ENCODE measurements at regions of chr2 and their contacts with region 1.

Region 1: GRCh38 chr2:84856787-84857186 is 24.1 kb downstream of the TRABD2A start:
- DNase-seq: peak in 3 of 5 donors; percentile 29 to 51 (median 30)
- H3K4me3 ChIP-seq: peak overlapping the region in 1 of 2 donors; percentile 23
- H3K4me3 Mint-ChIP-seq: peak overlapping the region; percentile 40 to 89 (median 77)
- H3K27ac ChIP-seq: peak overlapping the region; percentile 53
- H3K27ac Mint-ChIP-seq: peak overlapping the region; percentile 83 to 97 (median 96)
- H3K4me1 ChIP-seq: peaks cover 98% of the 10 kb centered on the region
- H3K4me1 Mint-ChIP-seq: peaks cover 84 to 97% (median 91%) of the 10 kb centered on the region in 4 donors
- H3K27me3 ChIP-seq: no peaks in the 10 kb centered on the region
- H3K27me3 Mint-ChIP-seq: no peaks in the 10 kb centered on the region

Region 2: GRCh38 chr2:84686783-84687476 is 169.9 kb before region 1 on chr2:
- CTCF ChIA-PET with region 1: no interaction called
- POLR2A ChIA-PET with region 1: no interaction called
- intact Hi-C with region 1: loop called (anchors 5 kb)
- DNase-seq: no peak
- H3K4me3 ChIP-seq: no peak overlapping the region
- H3K4me3 Mint-ChIP-seq: peak overlapping the region in 3 of 8 donors; percentile 14 to 48 (median 42)
- H3K27ac ChIP-seq: no peak overlapping the region
- H3K27ac Mint-ChIP-seq: peak overlapping the region in 5 of 7 donors; percentile 5 to 77 (median 54)
- H3K4me1 ChIP-seq: peaks cover 10% of the 10 kb centered on the region
- H3K4me1 Mint-ChIP-seq: peaks cover 16 to 30% (median 21%) of the 10 kb centered on the region in 4 donors
- H3K27me3 ChIP-seq: no peaks in the 10 kb centered on the region
- H3K27me3 Mint-ChIP-seq: no peaks in the 10 kb centered on the region

Region 3: DNA sequence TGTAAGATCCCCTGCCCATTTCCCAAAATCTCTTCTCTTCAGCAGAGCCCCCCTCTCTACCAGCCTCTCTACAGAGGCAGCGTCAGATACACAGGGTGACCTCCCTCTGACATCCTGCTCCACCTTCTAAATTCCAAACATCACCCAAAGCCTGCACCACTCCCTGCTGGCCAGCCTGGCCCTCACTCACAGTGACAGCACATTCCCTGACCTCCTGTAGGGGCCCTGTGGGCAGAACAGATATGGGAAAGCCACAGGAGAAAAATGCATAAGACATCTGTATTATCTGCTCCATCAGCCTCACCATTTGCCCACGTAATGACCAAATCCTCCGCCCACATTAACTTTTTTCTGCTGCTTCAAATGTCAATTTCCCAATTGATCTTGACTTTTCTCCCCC is 16.5 kb before region 1 on chr2:
- CTCF ChIA-PET with region 1: interaction called, 14 read pairs
- POLR2A ChIA-PET with region 1: interaction called, 132 read pairs
- intact Hi-C with region 1: no loop called
- DNase-seq: peak in 1 of 5 donors; percentile 10
- H3K4me3 ChIP-seq: peak overlapping the region in 1 of 2 donors; percentile 39
- H3K4me3 Mint-ChIP-seq: peak overlapping the region; percentile 63 to 87 (median 80)
- H3K27ac ChIP-seq: peak overlapping the region; percentile 61
- H3K27ac Mint-ChIP-seq: peak overlapping the region; percentile 92 to 98 (median 96)
- H3K4me1 ChIP-seq: peaks cover 88% of the 10 kb centered on the region
- H3K4me1 Mint-ChIP-seq: peaks cover 74 to 91% (median 84%) of the 10 kb centered on the region in 4 donors
- H3K27me3 ChIP-seq: no peaks in the 10 kb centered on the region
- H3K27me3 Mint-ChIP-seq: no peaks in the 10 kb centered on the region

Region 4: GRCh38 chr2:84846041-84846663 is 10.6 kb before region 1 on chr2:
- CTCF ChIA-PET with region 1: interaction called, 28 read pairs
- POLR2A ChIA-PET with region 1: interaction called, 132 read pairs
- intact Hi-C with region 1: loop called (anchors 1 kb)
- DNase-seq: peak; percentile 67 to 84 (median 78)
- H3K4me3 ChIP-seq: peak overlapping the region; percentile 11 to 15
- H3K4me3 Mint-ChIP-seq: peak overlapping the region; percentile 31 to 84 (median 74)
- H3K27ac ChIP-seq: peak overlapping the region; percentile 61
- H3K27ac Mint-ChIP-seq: peak overlapping the region; percentile 92 to 99 (median 97)
- H3K4me1 ChIP-seq: peaks cover 99% of the 10 kb centered on the region
- H3K4me1 Mint-ChIP-seq: peaks cover 81 to 98% (median 90%) of the 10 kb centered on the region in 4 donors
- H3K27me3 ChIP-seq: no peaks in the 10 kb centered on the region
- H3K27me3 Mint-ChIP-seq: no peaks in the 10 kb centered on the region

Region 5: DNA sequence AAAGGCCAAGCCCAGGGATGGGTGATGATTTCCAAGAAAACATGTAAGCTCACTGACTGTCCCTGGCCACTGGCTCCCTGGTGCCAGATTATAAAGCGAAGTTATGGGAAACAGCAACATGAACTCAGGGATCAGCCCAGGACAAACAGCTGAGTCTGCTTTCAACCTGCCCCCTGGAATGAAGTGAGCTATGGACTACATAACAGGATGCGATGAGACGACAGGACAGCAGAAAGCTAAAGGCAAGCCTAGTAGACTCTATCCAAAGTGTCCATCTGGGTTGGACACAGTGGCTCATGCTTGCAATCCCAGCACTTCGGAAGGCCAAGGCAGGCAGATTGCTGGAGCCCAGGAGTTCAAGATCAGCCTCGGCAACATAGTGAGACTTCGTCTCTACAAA is 97.5 kb after region 1 on chr2:
- CTCF ChIA-PET with region 1: no interaction called
- POLR2A ChIA-PET with region 1: no interaction called
- intact Hi-C with region 1: no loop called
- DNase-seq: no peak
- H3K4me3 ChIP-seq: no peak overlapping the region
- H3K4me3 Mint-ChIP-seq: no peak overlapping the region
- H3K27ac ChIP-seq: no peak overlapping the region
- H3K27ac Mint-ChIP-seq: peak overlapping the region in 2 of 7 donors; percentile 32 to 59
- H3K4me1 ChIP-seq: no peaks in the 10 kb centered on the region
- H3K4me1 Mint-ChIP-seq: peaks cover 0 to 14% (median 8%) of the 10 kb centered on the region in 4 donors
- H3K27me3 ChIP-seq: no peaks in the 10 kb centered on the region
- H3K27me3 Mint-ChIP-seq: no peaks in the 10 kb centered on the region

Measured in CD4-positive, alpha-beta memory T cell (primary cell).